Activated CD4-positive, alpha-beta memory T cell treated with anti-CD3 and anti-CD28 coated beads for 36 hours (primary cell): ENCODE measurements at regions of chr17 and their contacts with region 1.

Region 1: GRCh38 chr17:9575381-9576101 is at the start of gene STX8:
- DNase-seq: peak; percentile 91
- H3K4me3 Mint-ChIP-seq: peak within 1 kb of the TSS; percentile 98
- H3K27ac Mint-ChIP-seq: peak within 1 kb of the TSS; percentile 82
- H3K4me1 Mint-ChIP-seq: peaks cover 25% of the 10 kb centered on the region
- H3K27me3 Mint-ChIP-seq: no peaks in the 10 kb centered on the region
- total RNA-seq, gene STX8: 75.2 to 75.8 TPM

Region 2: DNA sequence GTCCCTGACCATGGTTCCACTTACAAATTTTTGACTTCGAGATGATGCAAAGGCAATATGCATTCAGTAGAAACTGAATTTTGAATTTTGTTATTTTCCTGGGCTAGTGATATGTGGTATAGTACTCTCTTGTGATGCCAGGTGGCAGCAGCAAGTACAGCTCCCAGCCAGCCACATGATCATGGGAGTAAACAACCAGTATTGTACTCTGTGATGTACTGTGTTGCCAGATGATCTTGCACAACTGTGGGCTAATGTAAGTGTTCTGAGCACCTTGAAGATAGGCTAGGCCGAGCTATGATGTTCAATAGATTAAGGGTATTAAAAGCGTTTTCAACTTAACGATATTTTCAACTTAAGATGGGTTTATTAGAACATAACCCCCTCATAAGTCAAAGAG is 250.7 kb before region 1 on chr17:
- CTCF ChIA-PET with region 1: no interaction called
- POLR2A ChIA-PET with region 1: no interaction called
- intact Hi-C with region 1: no loop called
- DNase-seq: no peak
- H3K4me3 Mint-ChIP-seq: no peak overlapping the region
- H3K27ac Mint-ChIP-seq: no peak overlapping the region
- H3K4me1 Mint-ChIP-seq: no peaks in the 10 kb centered on the region
- H3K27me3 Mint-ChIP-seq: no peaks in the 10 kb centered on the region

Region 3: DNA sequence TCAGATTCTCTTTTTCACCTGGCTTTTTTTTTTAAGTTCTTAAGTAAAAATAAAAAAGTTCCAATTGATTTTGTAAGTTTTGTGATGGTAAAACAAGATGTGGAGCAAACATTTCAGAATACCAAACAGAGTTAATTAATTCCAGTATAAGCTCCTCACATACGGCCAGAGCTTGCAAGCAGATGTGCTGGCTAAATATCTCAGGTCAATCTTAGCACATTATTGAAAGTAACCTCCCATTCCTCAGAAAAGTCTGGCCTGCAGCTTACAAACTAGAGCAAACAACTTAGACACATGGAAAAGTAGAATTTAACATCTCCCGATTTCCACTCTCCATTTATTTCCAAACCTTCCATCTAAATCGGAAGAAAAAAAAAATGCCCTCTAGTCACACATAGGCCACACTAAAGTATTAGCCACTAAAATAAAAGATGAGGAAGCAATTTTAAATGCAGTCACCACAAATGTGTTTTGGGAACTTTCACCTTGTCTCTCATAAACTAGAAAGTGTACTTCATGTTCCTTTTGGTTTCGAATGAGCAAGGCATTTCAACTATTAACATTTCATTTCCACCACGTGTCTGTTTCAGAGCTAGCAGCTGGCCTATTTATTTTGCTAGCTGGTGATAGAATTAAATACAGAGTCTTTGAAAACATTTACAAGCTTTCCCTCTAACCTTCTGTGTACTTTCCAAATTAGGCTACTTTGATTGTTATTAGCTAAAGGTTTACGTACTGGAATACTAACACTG is 143.2 kb before region 1 on chr17:
- CTCF ChIA-PET with region 1: no interaction called
- POLR2A ChIA-PET with region 1: no interaction called
- intact Hi-C with region 1: no loop called
- DNase-seq: no peak
- H3K4me3 Mint-ChIP-seq: no peak overlapping the region
- H3K27ac Mint-ChIP-seq: no peak overlapping the region
- H3K4me1 Mint-ChIP-seq: peaks cover 21% of the 10 kb centered on the region
- H3K27me3 Mint-ChIP-seq: no peaks in the 10 kb centered on the region

Region 4: DNA sequence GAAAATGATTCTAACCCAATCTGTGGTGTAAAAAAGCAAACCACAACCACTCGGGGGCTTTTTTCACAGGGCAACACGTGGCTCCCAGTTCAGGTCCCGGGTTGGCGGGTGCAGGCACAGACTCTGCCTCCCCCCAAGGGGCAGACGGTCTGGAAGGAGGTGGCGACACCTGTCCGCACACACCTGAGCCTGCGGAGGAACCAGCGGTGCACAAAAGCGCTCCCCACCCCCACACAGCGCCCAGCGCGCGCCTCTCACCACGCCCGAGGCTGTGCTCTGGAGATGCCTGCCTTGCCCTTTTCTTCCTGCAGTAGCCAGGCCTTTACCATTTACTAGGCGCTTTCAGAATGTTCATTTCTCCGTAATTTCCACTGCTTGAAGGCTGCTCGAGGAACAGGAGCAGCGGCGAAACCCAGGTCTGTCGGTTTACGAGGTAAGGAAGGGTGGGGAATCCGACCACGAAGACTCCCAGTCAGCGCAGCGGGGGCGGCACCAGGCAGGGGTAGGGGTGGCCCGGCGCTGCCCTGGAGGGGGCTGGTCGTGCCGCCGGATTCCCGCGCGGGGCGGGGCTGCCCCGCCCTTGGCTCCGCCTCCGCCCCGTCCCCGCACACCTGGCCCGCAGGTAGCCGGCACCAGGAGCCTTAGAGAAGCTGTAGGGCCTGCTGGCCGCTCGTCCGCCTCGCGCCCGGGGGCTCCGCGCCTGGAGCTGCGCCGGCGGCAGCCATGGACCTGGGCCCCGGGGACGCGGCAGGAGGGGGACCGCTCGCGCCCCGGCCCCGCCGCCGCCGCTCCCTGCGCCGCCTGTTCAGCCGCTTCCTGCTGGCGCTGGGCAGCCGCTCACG is 69.6 kb after region 1 on chr17 and contains the start of gene USP43:
- CTCF ChIA-PET with region 1: interaction called, 5 read pairs
- POLR2A ChIA-PET with region 1: no interaction called
- intact Hi-C with region 1: loop called (anchors 1 kb)
- DNase-seq: peak; percentile 35
- H3K4me3 Mint-ChIP-seq: peak within 1 kb of the TSS; percentile 75
- H3K27ac Mint-ChIP-seq: no peak within 1 kb of the TSS
- H3K4me1 Mint-ChIP-seq: peaks cover 7% of the 10 kb centered on the region
- H3K27me3 Mint-ChIP-seq: peaks cover 53% of the 10 kb centered on the region
- total RNA-seq, gene USP43: 0.34 to 0.50 TPM

Region 5: DNA sequence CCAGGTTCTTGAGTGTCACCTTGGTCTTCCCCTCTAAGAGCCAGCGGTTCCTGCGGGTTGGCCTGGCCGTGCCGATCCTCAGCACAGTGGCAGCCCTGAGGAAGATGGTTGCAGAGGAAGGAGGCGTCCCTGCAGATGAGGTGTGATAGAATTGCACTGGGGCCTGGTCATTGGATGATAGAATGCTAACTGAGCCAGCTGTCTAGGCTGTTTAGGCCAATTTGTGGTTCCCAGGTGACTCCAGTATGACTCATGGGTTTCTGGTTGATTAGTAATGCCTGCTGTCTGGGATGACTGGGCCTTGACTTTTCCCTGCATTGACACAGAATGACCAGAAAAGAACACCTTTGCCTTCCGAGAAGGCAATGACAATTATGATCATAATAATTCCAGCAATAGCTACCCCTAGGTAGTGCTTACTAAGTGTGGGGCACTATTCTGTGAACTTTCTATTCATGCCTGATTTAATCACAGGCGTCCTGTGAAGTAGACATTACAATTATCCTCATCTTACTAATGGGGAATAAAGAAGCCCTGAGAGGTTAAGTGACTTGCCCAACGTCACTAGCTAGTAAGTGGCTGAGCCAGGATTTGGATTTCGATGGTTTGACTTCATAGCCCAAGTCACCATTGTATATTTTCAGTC is 101.3 kb after region 1 on chr17:
- CTCF ChIA-PET with region 1: interaction called, 9 read pairs
- POLR2A ChIA-PET with region 1: no interaction called
- intact Hi-C with region 1: loop called (anchors 1 kb)
- DNase-seq: peak; percentile 56
- H3K4me3 Mint-ChIP-seq: no peak overlapping the region
- H3K27ac Mint-ChIP-seq: peak overlapping the region; percentile 71
- H3K4me1 Mint-ChIP-seq: peaks cover 15% of the 10 kb centered on the region
- H3K27me3 Mint-ChIP-seq: peaks cover 7% of the 10 kb centered on the region

Region 6: GRCh38 chr17:9743096-9743495 is 167.6 kb after region 1 on chr17:
- CTCF ChIA-PET with region 1: interaction called, 3 read pairs
- POLR2A ChIA-PET with region 1: no interaction called
- intact Hi-C with region 1: loop called (anchors 10 kb)
- DNase-seq: no peak
- H3K4me3 Mint-ChIP-seq: no peak overlapping the region
- H3K27ac Mint-ChIP-seq: no peak overlapping the region
- H3K4me1 Mint-ChIP-seq: no peaks in the 10 kb centered on the region
- H3K27me3 Mint-ChIP-seq: no peaks in the 10 kb centered on the region

Region 7: GRCh38 chr17:9768381-9768934 is 192.9 kb after region 1 on chr17:
- CTCF ChIA-PET with region 1: interaction called, 22 read pairs
- POLR2A ChIA-PET with region 1: no interaction called
- intact Hi-C with region 1: no loop called
- DNase-seq: no peak
- H3K4me3 Mint-ChIP-seq: no peak overlapping the region
- H3K27ac Mint-ChIP-seq: no peak overlapping the region
- H3K4me1 Mint-ChIP-seq: no peaks in the 10 kb centered on the region
- H3K27me3 Mint-ChIP-seq: peaks cover 10% of the 10 kb centered on the region